Sciatic nerve (tissue), 2 donors: ENCODE measurements at regions of chr2 and their contacts with region 1.

Region 1: GRCh38 chr2:27016801-27017325 is 15.9 kb upstream of the TMEM214 start:
- DNase-seq: no peak
- ATAC-seq: no peak

Region 2: GRCh38 chr2:26964446-26965130 is 52.3 kb before region 1 on chr2:
- intact Hi-C with region 1: loop called (anchors 5 kb)
- DNase-seq: no peak
- ATAC-seq: no peak

Region 3: DNA sequence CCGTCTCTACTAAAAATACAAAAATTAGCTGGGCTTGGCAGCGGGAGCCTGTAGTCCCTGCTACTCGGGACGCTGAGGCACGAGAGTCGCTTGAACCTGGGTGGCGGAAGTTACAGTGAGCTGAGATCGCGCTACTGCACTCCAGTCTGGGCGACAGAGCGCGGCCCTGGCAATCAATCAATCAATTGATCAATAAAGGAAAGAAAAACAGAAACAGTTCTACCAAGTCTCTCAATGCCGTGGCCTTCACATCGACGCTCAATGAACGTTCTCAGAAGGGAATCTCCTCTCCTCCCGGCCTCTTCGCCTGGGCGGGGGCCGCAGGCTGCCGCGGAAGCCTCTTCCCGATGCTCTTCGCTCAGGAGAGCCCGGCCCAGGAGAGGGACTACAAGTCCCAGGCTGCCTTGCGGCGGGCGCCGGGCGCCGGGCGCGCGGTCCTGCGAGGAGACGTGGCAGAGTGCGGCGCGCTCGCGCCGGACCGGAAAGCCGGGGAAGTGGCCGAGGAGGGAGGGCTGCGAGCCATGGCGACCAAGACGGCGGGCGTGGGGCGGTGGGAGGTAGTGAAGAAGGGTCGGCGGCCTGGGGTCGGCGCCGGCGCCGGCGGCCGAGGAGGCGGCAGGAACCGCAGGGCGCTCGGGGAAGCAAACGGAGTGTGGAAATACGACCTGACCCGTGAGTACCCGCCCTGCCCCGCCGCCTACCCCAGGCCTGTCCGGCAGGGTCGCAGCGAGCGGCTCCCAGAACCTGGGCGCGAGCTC is 15.8 kb after region 1 on chr2 and contains the start of gene TMEM214:
- intact Hi-C with region 1: no loop called
- DNase-seq: peak; percentile 93
- ATAC-seq: peak; percentile 98
- total RNA-seq, gene TMEM214: 74.0 TPM